Mammary epithelial cell (primary cell): ENCODE measurements at regions of chr16 and their contacts with region 1.

Region 1: DNA sequence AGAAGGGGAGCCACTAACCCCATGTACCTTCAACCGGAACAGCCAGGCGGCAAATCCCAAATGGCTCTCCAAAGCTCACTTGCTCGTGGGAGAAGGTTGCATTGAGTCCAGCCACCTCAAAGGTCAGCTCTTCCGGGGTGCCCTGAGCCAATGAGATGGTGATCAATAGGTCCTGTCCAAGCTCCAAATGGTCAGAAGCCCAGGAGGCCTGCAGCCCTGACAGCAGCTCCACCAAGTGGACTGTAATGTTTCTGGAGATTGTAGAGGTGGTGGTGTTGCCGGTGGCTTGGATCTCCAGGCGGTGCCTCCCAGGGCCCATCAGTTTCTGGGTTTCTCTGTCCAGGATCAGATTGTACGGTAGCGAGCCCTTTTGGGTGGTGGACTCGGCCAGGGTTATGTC is 39.9 kb upstream of the BCO1 start:
- DNase-seq: no peak
- H3K4me3 ChIP-seq: no peak overlapping the region
- H3K27ac ChIP-seq: no peak overlapping the region
- H3K4me1 ChIP-seq: no peaks in the 10 kb centered on the region
- H3K27me3 ChIP-seq: peaks cover 1% of the 10 kb centered on the region
- CTCF ChIP-seq: peak; percentile 13 to 50

Region 2: GRCh38 chr16:81095953-81096717 is 102.5 kb before region 1 on chr16 and contains the start of gene GCSH:
- CTCF ChIA-PET with region 1: no interaction called
- dilution Hi-C with region 1: no loop called
- in situ Hi-C with region 1: no loop called
- intact Hi-C with region 1: loop called (anchors 5 kb)
- DNase-seq: peak; percentile 99
- H3K4me3 ChIP-seq: peak within 1 kb of the TSS; percentile 85 to 95 (median 92)
- H3K27ac ChIP-seq: peak within 1 kb of the TSS; percentile 74
- H3K4me1 ChIP-seq: peaks cover 7% of the 10 kb centered on the region
- H3K27me3 ChIP-seq: no peaks in the 10 kb centered on the region
- CTCF ChIP-seq: no peak
- total RNA-seq, gene GCSH: 27.5 to 41.9 TPM